Activated CD4-positive, alpha-beta T cell treated with anti-CD3 and anti-CD28 coated beads for 36 hours (primary cell): ENCODE measurements at regions of chr11 and their contacts with region 1.

Region 1: GRCh38 chr11:4187055-4187988 is 92.7 kb downstream of the RRM1 start:
- DNase-seq: peak; percentile 92
- ATAC-seq: peak; percentile 95
- H3K4me3 Mint-ChIP-seq: peak overlapping the region; percentile 60
- H3K27ac Mint-ChIP-seq: no peak overlapping the region
- H3K4me1 Mint-ChIP-seq: peaks cover 3% of the 10 kb centered on the region
- H3K27me3 Mint-ChIP-seq: no peaks in the 10 kb centered on the region

Region 2: GRCh38 chr11:4393209-4393857 is 206.0 kb after region 1 on chr11 and contains the start of gene TRIM21:
- CTCF ChIA-PET with region 1: interaction called, 11 read pairs
- POLR2A ChIA-PET with region 1: no interaction called
- intact Hi-C with region 1: loop called (anchors 1 to 10 kb)
- DNase-seq: peak; percentile 93
- ATAC-seq: peak; percentile 99
- H3K4me3 Mint-ChIP-seq: peak within 1 kb of the TSS; percentile 93
- H3K27ac Mint-ChIP-seq: peak within 1 kb of the TSS; percentile 94
- H3K4me1 Mint-ChIP-seq: peaks cover 35% of the 10 kb centered on the region
- H3K27me3 Mint-ChIP-seq: peaks cover 5% of the 10 kb centered on the region
- total RNA-seq, gene TRIM21: 45.6 to 66.6 TPM

Region 3: DNA sequence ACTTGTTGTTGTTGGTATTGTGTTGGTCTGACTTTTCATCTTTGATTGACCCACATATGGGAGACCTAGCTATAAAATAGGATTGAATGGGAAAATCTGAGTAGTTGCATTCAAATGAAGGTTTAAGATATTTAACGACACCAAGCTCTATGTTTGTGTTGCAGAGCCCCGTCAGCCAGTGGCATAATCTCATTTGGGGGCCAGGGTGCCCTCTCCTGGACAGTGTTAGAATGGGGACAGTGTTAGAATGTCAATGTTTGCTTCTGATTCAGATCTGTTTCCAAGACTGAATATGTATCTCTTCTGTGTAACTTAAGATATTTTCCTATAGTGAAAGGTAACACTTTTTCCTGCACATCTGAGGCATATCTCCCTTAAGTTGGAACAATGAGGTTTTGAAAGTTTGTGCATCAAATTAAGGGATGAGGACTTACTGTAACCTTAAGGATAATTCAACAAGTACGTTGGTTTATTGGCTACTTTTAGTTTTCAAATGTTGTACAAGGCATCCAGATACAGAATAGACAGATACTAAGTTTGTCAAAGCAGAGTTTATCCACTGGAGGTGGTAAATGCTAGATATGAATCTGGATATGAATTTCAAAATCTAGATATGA is 352.4 kb after region 1 on chr11:
- CTCF ChIA-PET with region 1: interaction called, 36 read pairs
- POLR2A ChIA-PET with region 1: no interaction called
- intact Hi-C with region 1: loop called (anchors 1 kb)
- DNase-seq: peak; percentile 71
- ATAC-seq: peak; percentile 89
- H3K4me3 Mint-ChIP-seq: no peak overlapping the region
- H3K27ac Mint-ChIP-seq: no peak overlapping the region
- H3K4me1 Mint-ChIP-seq: no peaks in the 10 kb centered on the region
- H3K27me3 Mint-ChIP-seq: peaks cover 4% of the 10 kb centered on the region

Region 4: GRCh38 chr11:4607781-4608666 is 420.7 kb after region 1 on chr11 and contains the start of gene TRIM68:
- CTCF ChIA-PET with region 1: interaction called, 3 read pairs
- POLR2A ChIA-PET with region 1: no interaction called
- intact Hi-C with region 1: loop called in 1 of 2 experiments (anchors 1 kb)
- DNase-seq: peak; percentile 97
- ATAC-seq: peak; percentile 100
- H3K4me3 Mint-ChIP-seq: peak within 1 kb of the TSS; percentile 90
- H3K27ac Mint-ChIP-seq: peak within 1 kb of the TSS; percentile 90
- H3K4me1 Mint-ChIP-seq: peaks cover 35% of the 10 kb centered on the region
- H3K27me3 Mint-ChIP-seq: no peaks in the 10 kb centered on the region
- total RNA-seq, gene TRIM68: 8.9 to 9.2 TPM

Region 5: DNA sequence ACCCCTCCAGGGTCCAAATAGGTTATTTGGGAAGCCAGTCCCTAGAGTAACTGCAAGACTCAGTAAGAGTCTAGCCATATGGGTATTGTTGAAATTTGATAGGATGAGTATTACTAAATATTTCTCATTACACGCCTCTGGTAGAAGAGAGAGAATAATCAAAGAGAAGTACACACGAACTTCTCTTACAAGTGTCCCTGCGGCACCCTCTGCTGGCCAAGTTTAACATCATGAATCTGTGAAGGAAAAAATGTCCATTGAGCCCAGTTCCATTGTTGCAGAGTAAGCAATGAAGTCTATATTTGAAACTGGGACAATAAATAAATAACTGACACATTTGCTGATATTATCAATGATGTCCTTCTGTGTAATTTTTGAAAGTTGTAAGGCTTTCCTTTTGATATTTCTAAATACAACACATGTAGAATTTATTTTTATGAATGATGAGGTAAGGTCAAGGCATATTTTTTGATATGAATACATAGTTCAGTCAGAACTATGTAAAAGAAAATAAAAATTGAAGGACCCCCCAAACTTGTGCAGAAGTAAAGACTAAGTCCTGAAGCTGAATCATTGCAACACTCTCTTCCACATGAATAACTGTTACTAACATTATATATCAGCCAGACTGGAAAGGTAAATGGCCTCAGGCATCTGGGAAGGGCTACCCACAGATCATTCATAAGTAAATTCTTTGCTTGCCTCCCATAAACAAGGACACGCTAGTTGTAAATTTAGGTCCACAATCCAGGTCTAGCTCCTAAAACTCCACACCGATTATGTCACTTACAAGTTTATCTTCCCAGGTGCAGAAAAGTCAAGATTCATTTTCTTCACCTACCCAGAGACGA is 817.3 kb after region 1 on chr11:
- CTCF ChIA-PET with region 1: interaction called, 3 read pairs
- POLR2A ChIA-PET with region 1: no interaction called
- intact Hi-C with region 1: loop called in 1 of 2 experiments (anchors 1 kb)
- DNase-seq: peak; percentile 60
- ATAC-seq: no peak
- H3K4me3 Mint-ChIP-seq: no peak overlapping the region
- H3K27ac Mint-ChIP-seq: no peak overlapping the region
- H3K4me1 Mint-ChIP-seq: no peaks in the 10 kb centered on the region
- H3K27me3 Mint-ChIP-seq: peaks cover 3% of the 10 kb centered on the region